ENCODE measurements at regions of chr5 and their contacts with region 1.

Region 1: DNA sequence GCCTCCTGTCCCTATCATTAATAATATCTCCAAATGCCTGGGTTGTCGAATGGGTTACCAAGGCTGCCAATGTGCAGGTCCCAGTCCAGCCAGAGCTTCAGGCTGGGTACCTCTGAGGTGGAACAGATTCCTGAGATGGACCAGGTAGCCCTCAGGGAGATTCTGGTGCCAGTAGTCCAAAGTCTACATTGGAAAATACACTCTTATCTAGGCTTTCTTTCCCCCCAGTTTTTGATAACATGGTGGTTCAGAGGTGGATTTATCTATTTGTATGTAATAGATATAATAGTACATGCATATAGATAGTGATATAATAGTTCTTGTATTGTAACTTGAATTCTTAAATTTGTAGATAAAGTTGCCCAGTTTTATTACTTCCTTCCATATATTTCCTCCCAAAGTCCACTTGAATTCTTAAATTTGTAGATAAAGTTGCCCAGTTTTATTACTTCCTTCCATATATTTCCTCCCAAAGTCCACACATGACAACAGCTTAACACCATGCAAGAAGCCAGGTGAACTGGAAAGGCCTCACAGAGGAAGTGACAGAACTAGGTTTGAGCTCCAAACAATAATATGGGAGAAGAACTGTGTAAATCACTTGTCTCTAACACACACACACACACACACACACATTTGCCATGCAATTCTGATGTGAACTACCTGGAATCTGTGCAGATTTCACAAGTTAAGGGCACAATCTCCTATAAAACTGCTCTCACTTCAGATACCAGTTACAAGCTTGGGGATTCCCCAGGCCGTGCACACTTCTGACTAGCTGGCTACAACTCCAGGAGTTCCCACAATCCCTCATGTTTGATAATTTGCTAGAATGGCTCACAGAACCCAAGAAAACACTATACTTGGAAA is 30.7 kb upstream of the ERAP1 start:
- DNase-seq: no peak
- H3K4me3 ChIP-seq: no peak overlapping the region
- H3K27ac ChIP-seq: no peak overlapping the region
- H3K27me3 ChIP-seq: no peaks in the 10 kb centered on the region
- CTCF ChIP-seq: no peak

Region 2: GRCh38 chr5:95460662-95461061 is 1377.8 kb before region 1 on chr5:
- CTCF ChIA-PET with region 1: interaction called, 10 read pairs
- POLR2A ChIA-PET with region 1: no interaction called
- DNase-seq: no peak
- H3K4me3 ChIP-seq: no peak overlapping the region
- H3K27ac ChIP-seq: no peak overlapping the region
- H3K27me3 ChIP-seq: no peaks in the 10 kb centered on the region
- CTCF ChIP-seq: no peak

Region 3: DNA sequence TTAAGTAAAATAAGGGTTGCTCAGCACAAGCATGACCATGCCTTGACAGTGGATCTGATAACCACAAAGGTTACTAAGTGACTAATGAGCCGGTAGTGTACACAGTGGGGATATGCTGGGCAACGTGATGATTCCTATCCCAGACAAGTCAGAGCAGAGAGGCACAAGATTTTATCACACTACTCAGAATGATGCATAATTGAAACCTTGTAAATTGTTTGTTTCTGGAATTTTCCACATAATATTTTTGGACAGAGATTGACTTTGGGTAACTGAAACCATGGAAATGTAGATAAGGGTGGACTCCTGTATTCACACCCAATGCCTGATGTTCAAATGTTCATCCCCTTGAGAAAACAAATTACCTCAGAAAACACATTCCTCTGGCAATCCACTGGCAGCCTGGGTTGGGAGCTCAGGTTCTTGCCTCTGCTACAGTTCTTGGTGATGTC is 14.5 kb before region 1 on chr5:
- CTCF ChIA-PET with region 1: no interaction called
- POLR2A ChIA-PET with region 1: no interaction called
- DNase-seq: no peak
- H3K4me3 ChIP-seq: no peak overlapping the region
- H3K27ac ChIP-seq: no peak overlapping the region
- H3K27me3 ChIP-seq: no peaks in the 10 kb centered on the region
- CTCF ChIP-seq: no peak

Measured in AG04450 (cell line).